Dorsolateral prefrontal cortex (tissue), 120 donors: ENCODE measurements at regions of chr18 and their contacts with region 1.

Region 1: GRCh38 chr18:34397286-34397896 is 172.7 kb upstream of the NOL4 start:
- DNase-seq: no peak
- H3K4me3 ChIP-seq: no peak overlapping the region
- H3K27ac ChIP-seq: no peak overlapping the region
- H3K27me3 ChIP-seq: peaks cover 0 to 3% (median 0%) of the 10 kb centered on the region in 45 donors
- CTCF ChIP-seq: no peak

Region 2: GRCh38 chr18:34467058-34467457 is 69.7 kb after region 1 on chr18:
- intact Hi-C with region 1: no loop called
- DNase-seq: no peak
- H3K4me3 ChIP-seq: no peak overlapping the region
- H3K27ac ChIP-seq: no peak overlapping the region
- H3K27me3 ChIP-seq: no peaks in the 10 kb centered on the region
- CTCF ChIP-seq: no peak

Region 3: GRCh38 chr18:34529358-34530335 is 132.3 kb after region 1 on chr18:
- intact Hi-C with region 1: loop called in 1 of 2 experiments (anchors 10 kb)
- DNase-seq: no peak
- H3K4me3 ChIP-seq: no peak overlapping the region
- H3K27ac ChIP-seq: no peak overlapping the region
- H3K27me3 ChIP-seq: no peaks in the 10 kb centered on the region
- CTCF ChIP-seq: no peak